Activated CD8-positive, alpha-beta T cell treated with anti-CD3 and anti-CD28 coated beads, Interleukin-2, amount 10 ng/mL, durations not matched to agents 7 days and 5 days (primary cell): ENCODE measurements at regions of chr6 and their contacts with region 1.

Region 1: GRCh38 chr6:136550330-136551071 is at the start of gene MAP7:
- DNase-seq: peak; percentile 56
- ATAC-seq: peak; percentile 90
- H3K4me3 Mint-ChIP-seq: peak within 1 kb of the TSS; percentile 42
- H3K27ac Mint-ChIP-seq: no peak within 1 kb of the TSS
- H3K4me1 Mint-ChIP-seq: peaks cover 6% of the 10 kb centered on the region
- H3K27me3 Mint-ChIP-seq: peaks cover 49% of the 10 kb centered on the region
- total RNA-seq, gene MAP7: 0.31 to 0.45 TPM

Region 2: DNA sequence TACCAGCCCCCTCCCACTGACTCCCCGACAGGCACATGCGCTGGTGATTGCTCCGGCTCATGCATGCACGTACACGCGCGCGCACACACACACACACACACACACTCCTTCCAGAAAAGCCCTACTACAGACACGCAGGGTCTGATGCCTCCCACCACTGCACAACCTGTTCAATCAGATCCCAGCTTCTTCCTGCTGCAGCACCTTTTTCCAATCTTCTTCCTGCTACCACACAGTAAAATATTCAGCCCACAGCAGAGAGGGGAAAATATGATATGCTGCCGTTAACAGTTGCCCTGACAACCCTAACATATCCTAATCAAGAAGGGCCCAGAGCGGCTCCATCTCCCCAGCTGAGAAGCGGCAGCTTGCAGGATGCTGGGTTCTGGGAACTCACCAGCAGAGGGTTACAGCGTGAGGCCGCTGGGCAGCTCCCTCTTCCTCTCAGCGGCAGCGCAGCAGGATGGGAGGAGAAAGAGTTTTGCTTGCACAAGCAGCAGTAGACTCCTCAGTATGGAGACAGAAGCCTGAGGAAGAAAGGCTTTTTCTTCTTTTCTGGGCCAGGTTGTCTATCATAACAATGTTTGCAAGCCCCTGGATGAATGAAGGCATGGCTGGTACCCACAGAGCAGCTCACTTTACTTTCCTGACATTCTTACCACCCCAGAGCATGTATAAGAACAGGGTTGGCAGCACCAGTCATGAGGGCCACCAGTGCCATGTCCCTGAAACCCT is 24.1 kb before region 1 on chr6:
- CTCF ChIA-PET with region 1: interaction called, 12 read pairs
- POLR2A ChIA-PET with region 1: no interaction called
- DNase-seq: peak; percentile 65
- ATAC-seq: peak; percentile 94
- H3K4me3 Mint-ChIP-seq: peak overlapping the region; percentile 7
- H3K27ac Mint-ChIP-seq: no peak overlapping the region
- H3K4me1 Mint-ChIP-seq: peaks cover 11% of the 10 kb centered on the region
- H3K27me3 Mint-ChIP-seq: peaks cover 16% of the 10 kb centered on the region

Region 3: DNA sequence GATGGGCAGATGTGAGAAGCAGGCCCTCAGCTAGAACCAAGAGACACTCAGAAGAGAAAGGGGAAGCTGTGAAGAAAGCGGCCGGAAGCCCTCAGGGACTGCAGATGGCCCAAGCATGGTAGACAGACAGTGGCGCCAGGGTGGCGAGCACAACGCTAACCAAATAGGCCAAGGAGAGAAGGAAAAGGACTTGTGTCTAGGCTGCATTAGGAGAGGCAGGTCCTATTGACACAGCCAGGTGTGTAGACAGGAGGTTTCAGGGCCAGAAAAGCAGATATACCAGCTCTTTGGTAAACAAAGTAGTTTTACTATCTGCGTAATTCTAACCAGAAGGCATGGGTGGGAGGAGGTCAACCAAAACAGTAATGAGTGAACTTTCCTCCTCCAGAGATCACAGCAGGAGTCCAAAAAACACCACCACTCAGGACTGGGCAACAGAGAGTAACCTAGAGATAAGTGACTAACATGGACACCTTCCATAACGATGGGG is 15.6 kb after region 1 on chr6:
- CTCF ChIA-PET with region 1: interaction called, 17 read pairs
- POLR2A ChIA-PET with region 1: no interaction called
- DNase-seq: no peak
- ATAC-seq: no peak
- H3K4me3 Mint-ChIP-seq: no peak overlapping the region
- H3K27ac Mint-ChIP-seq: no peak overlapping the region
- H3K4me1 Mint-ChIP-seq: peaks cover 17% of the 10 kb centered on the region
- H3K27me3 Mint-ChIP-seq: no peaks in the 10 kb centered on the region